ENCODE measurements at regions of chr3 and their contacts with region 1.

Region 1: DNA sequence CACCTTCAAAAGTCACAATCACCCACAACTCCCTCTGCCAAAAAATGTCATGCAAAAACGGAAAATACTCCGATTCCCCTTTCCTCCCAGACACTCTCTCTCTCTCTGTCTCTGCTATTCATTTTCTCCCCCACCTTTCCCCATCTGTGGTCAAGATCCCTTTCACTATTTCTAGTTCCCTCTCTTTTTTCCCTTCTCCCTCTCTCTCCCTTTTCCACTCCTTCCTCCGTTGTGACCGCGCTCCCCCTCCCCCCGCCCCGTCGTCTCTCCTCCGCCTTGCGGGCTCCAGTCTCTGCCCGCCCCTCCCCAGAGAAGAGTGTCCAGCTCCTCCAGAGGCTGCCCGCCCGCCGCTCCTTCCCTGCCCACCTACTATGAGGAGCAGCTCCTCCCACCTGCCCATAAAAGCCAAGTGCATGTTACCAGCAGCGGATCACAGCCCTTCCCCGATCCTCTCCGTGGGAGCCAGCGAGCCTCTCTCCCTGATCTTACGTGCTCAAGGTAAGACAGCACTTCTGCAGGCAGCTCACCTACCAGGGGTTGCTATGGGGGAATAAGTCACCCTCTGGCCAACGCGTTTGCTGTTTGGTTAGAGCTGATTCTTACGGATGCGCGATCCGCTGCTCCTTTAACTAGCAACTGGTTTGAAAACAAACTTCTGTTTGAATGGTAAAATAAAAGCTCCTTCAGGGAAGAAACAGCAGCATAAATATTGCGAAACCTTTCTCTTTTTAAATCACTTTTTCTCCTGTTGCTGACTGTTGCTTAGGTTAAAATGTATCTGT is at the start of gene COL8A1:
- DNase-seq: peak; percentile 87
- H3K4me3 ChIP-seq: peak within 1 kb of the TSS; percentile 43 to 67 (median 62)
- H3K27ac ChIP-seq: peak within 1 kb of the TSS; percentile 85 to 94 (median 89)
- H3K4me1 ChIP-seq: peaks cover 0 to 10% (median 5%) of the 10 kb centered on the region in 4 donors
- H3K27me3 ChIP-seq: no peaks in the 10 kb centered on the region
- CTCF ChIP-seq: no peak
- EP300 ChIP-seq: no peak
- POLR2A ChIP-seq: peak in 1 of 2 donors; percentile 30
- total RNA-seq, gene COL8A1: 15.3 to 39.6 (median 18.3) TPM

Region 2: GRCh38 chr3:99499235-99500158 is 138.9 kb before region 1 on chr3:
- intact Hi-C with region 1: loop called (anchors 5 kb)
- DNase-seq: no peak
- H3K4me3 ChIP-seq: no peak overlapping the region
- H3K27ac ChIP-seq: no peak overlapping the region
- H3K4me1 ChIP-seq: peaks cover 0 to 35% (median 27%) of the 10 kb centered on the region in 4 donors
- H3K27me3 ChIP-seq: no peaks in the 10 kb centered on the region
- CTCF ChIP-seq: peak in 3 of 4 experiments; percentile 33 to 62 (median 56)
- EP300 ChIP-seq: no peak
- POLR2A ChIP-seq: no peak

Region 3: GRCh38 chr3:99678023-99678422 is 39.7 kb after region 1 on chr3:
- intact Hi-C with region 1: loop called (anchors 5 kb)
- DNase-seq: peak; percentile 81
- H3K4me3 ChIP-seq: no peak overlapping the region
- H3K27ac ChIP-seq: peak overlapping the region; percentile 59 to 80 (median 72)
- H3K4me1 ChIP-seq: peaks cover 0 to 51% (median 30%) of the 10 kb centered on the region in 4 donors
- H3K27me3 ChIP-seq: no peaks in the 10 kb centered on the region
- CTCF ChIP-seq: no peak
- EP300 ChIP-seq: peak in 1 of 4 donors; percentile 24
- POLR2A ChIP-seq: no peak

Region 4: DNA sequence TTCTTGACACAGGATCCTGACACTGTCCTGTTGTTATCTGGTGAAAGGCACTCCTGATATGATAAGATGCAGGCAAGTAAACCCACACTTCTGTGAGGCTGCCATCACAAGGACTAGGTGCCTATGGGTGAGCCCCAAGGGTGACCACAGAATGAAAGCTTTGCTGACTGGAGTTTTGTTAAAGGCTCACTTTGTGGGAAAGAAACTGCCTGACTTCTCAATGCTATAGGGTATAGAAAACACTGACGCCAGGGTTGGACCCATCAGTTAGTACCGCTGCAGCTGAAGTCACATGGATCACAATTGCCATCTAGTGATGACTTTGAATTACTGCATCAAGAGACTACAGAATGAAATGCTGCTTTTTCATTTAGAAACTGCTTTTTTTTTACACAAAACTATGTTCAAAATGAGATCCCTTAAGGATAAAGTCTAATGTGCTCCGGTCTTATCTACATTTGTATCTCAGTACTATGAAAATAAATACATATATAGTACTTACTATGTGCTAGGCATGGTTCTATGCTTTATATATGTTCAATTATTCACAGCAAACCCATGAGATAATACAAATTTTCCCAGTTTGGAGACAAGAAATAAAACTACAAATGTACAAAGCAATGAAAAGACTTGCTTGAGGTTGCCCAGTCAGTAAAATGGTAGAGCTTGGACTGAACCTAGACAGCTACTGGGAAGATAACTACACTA is 115.1 kb after region 1 on chr3:
- intact Hi-C with region 1: loop called (anchors 5 kb)
- DNase-seq: no peak
- H3K4me3 ChIP-seq: no peak overlapping the region
- H3K27ac ChIP-seq: no peak overlapping the region
- H3K4me1 ChIP-seq: peaks cover 0 to 24% (median 10%) of the 10 kb centered on the region in 4 donors
- H3K27me3 ChIP-seq: no peaks in the 10 kb centered on the region
- CTCF ChIP-seq: peak; percentile 36 to 71 (median 55)
- EP300 ChIP-seq: no peak
- POLR2A ChIP-seq: no peak

Region 5: GRCh38 chr3:100260685-100261484 is 622.5 kb after region 1 on chr3 and contains the start of gene TBC1D23:
- intact Hi-C with region 1: loop called (anchors 5 kb)
- DNase-seq: peak; percentile 100
- H3K4me3 ChIP-seq: peak within 1 kb of the TSS; percentile 81 to 100 (median 99)
- H3K27ac ChIP-seq: peak within 1 kb of the TSS; percentile 96 to 99 (median 96)
- H3K4me1 ChIP-seq: peaks cover 0 to 45% (median 42%) of the 10 kb centered on the region in 4 donors
- H3K27me3 ChIP-seq: no peaks in the 10 kb centered on the region
- CTCF ChIP-seq: no peak
- EP300 ChIP-seq: peak in 1 of 4 donors; percentile 82
- POLR2A ChIP-seq: peak; percentile 80 to 84
- total RNA-seq, gene TBC1D23: 31.3 to 34.9 (median 32.7) TPM

Measured in sigmoid colon (tissue), 7 donors.